ENCODE measurements at regions of chr2 and their contacts with region 1.

Region 1: GRCh38 chr2:200735061-200735460 is 76.6 kb upstream of the BZW1 start:
- DNase-seq: no peak
- H3K4me3 ChIP-seq: no peak overlapping the region
- H3K27ac ChIP-seq: no peak overlapping the region
- H3K4me1 ChIP-seq: no peaks in the 10 kb centered on the region
- H3K27me3 ChIP-seq: peaks cover 0 to 2% of the 10 kb centered on the region in 2 experiments
- CTCF ChIP-seq: no peak
- POLR2A ChIP-seq: no peak

Region 2: GRCh38 chr2:199973703-199974102 is 761.4 kb before region 1 on chr2:
- CTCF ChIA-PET with region 1: interaction called, 29 read pairs
- POLR2A ChIA-PET with region 1: no interaction called
- dilution Hi-C with region 1: no loop called
- intact Hi-C with region 1: loop called (anchors 1 kb)
- DNase-seq: peak; percentile 57
- H3K4me3 ChIP-seq: no peak overlapping the region
- H3K27ac ChIP-seq: no peak overlapping the region
- H3K4me1 ChIP-seq: peaks cover 4% of the 10 kb centered on the region
- H3K27me3 ChIP-seq: no peaks in the 10 kb centered on the region
- CTCF ChIP-seq: peak; percentile 13 to 46
- POLR2A ChIP-seq: no peak

Region 3: DNA sequence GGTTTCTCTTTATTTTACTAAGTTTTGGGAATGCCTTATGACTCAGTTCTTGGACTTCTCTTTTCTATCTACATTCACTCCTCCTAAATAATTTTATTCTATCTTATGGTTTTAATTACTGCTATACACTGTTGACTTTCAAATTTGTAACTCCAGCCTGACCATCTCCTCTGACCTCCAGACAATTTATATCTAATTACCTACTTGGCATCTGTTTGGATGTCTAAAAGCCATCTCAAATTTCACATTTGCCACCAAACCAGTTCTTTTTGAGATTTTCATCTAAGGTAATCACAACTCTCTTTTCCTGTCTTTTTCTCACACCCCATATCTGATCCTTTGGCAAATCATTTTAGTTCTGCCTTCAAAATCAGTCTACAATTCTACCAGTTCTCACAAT is 197.5 kb before region 1 on chr2:
- CTCF ChIA-PET with region 1: no interaction called
- POLR2A ChIA-PET with region 1: no interaction called
- dilution Hi-C with region 1: no loop called
- intact Hi-C with region 1: no loop called
- DNase-seq: no peak
- H3K4me3 ChIP-seq: no peak overlapping the region
- H3K27ac ChIP-seq: no peak overlapping the region
- H3K4me1 ChIP-seq: no peaks in the 10 kb centered on the region
- H3K27me3 ChIP-seq: no peaks in the 10 kb centered on the region
- CTCF ChIP-seq: no peak
- POLR2A ChIP-seq: no peak

Region 4: GRCh38 chr2:200578778-200579177 is 156.3 kb before region 1 on chr2:
- CTCF ChIA-PET with region 1: interaction called, 11 read pairs
- POLR2A ChIA-PET with region 1: no interaction called
- dilution Hi-C with region 1: no loop called
- intact Hi-C with region 1: loop called (anchors 1 kb)
- DNase-seq: peak; percentile 9
- H3K4me3 ChIP-seq: no peak overlapping the region
- H3K27ac ChIP-seq: no peak overlapping the region
- H3K4me1 ChIP-seq: no peaks in the 10 kb centered on the region
- H3K27me3 ChIP-seq: no peaks in the 10 kb centered on the region
- CTCF ChIP-seq: peak; percentile 26 to 28
- POLR2A ChIP-seq: no peak

Region 5: GRCh38 chr2:200747668-200748618 is 12.9 kb after region 1 on chr2:
- CTCF ChIA-PET with region 1: interaction called, 13 read pairs
- POLR2A ChIA-PET with region 1: no interaction called
- dilution Hi-C with region 1: no loop called
- intact Hi-C with region 1: no loop called
- DNase-seq: no peak
- H3K4me3 ChIP-seq: no peak overlapping the region
- H3K27ac ChIP-seq: no peak overlapping the region
- H3K4me1 ChIP-seq: peaks cover 8% of the 10 kb centered on the region
- H3K27me3 ChIP-seq: no peaks in the 10 kb centered on the region
- CTCF ChIP-seq: no peak
- POLR2A ChIP-seq: no peak

Region 6: GRCh38 chr2:200787348-200788120 is 52.5 kb after region 1 on chr2:
- CTCF ChIA-PET with region 1: interaction called, 3 read pairs
- POLR2A ChIA-PET with region 1: no interaction called
- dilution Hi-C with region 1: no loop called
- intact Hi-C with region 1: loop called (anchors 1 kb)
- DNase-seq: peak; percentile 95
- H3K4me3 ChIP-seq: peak overlapping the region in 1 of 3 experiments; percentile 63
- H3K27ac ChIP-seq: peak overlapping the region; percentile 99
- H3K4me1 ChIP-seq: peaks cover 43% of the 10 kb centered on the region
- H3K27me3 ChIP-seq: no peaks in the 10 kb centered on the region
- CTCF ChIP-seq: no peak
- POLR2A ChIP-seq: peak; percentile 17

Region 7: DNA sequence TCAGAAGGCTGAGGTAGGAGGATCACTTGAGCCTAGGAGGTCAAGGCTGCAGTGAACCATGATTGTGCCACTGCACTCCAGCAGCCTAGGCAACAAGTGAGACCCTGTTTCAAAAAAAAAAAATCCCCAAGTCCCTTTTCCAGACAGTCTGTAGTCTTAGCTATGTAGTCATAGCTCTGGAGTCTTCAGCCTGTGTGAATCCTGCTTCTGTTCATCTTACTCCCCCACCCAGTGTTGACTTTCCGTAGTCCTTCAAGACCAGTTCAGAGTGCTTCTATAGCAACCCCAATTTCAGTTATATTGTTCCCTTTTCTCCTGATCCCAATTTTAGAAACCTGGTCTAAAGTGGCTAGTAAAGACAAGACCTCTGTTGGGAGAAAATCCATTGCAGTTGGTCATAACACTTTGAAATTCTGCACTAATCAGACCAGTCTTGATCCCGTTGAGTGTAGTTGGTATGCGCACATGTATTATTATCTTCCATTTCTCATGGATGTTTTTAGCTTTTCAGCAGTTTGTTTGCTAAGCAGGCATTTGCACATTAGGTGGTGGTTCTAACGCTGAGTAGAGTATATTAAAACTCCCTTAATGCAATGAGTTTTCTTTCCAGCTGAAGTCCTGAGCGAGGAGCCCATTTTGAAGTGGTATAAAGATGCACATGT is 85.6 kb after region 1 on chr2:
- CTCF ChIA-PET with region 1: no interaction called
- POLR2A ChIA-PET with region 1: no interaction called
- dilution Hi-C with region 1: no loop called
- intact Hi-C with region 1: no loop called
- DNase-seq: no peak
- H3K4me3 ChIP-seq: no peak overlapping the region
- H3K27ac ChIP-seq: no peak overlapping the region
- H3K4me1 ChIP-seq: no peaks in the 10 kb centered on the region
- H3K27me3 ChIP-seq: no peaks in the 10 kb centered on the region
- CTCF ChIP-seq: no peak
- POLR2A ChIP-seq: no peak